ENCODE measurements at regions of chr18 and their contacts with region 1.

Region 1: DNA sequence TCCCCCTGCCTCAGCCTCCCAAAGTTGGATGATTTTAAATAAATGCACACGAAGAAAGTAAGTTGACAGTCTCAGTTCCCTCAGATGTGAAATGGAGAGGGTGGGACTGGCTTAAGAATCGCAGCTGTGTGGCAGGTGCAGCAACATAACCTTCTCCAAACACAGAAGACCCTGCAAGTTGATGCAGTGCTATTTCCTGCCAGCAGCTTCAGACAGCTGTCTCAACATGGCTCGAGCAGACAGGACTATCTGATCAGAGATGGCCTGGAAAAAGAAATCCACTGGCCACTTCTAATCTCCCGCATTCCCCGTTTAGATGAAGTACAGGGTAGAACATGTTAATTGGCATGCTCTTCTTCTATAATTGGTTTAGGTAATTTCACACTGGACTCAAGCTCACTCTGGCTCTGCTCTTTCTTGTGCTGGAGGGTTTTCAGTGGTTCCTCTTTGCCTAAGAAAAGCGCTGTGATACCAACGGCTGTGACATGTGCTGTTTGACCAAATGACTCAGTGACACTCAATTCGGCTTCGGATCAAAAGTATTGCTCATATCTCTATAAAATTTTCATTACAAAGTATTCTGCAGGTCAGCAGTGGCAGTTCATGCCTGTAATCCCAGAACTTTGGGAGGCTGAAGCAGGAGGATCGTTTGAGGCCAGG is 40.2 kb downstream of the MYOM1 start:
- DNase-seq: no peak
- ATAC-seq: peak; percentile 5

Region 2: DNA sequence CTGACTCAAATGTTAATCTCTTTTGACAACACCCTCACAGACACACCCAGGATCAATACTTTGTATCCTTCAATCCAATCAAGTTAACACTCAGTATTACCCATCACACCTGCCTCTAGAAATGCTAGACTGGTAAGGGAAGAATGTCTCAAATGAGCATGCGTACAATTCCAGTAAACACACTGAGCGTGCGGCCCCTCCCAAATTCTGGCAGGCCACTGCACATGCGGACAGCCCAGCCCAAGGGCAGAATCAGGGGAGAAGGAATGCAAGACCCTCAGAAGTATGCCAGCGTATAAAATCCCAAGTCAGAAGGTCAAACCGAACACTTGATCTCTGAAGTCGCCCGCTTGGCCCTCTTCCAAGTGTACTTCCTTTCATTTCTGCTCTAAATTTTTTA is 340.4 kb before region 1 on chr18:
- intact Hi-C with region 1: no loop called
- DNase-seq: no peak
- ATAC-seq: no peak

Region 3: DNA sequence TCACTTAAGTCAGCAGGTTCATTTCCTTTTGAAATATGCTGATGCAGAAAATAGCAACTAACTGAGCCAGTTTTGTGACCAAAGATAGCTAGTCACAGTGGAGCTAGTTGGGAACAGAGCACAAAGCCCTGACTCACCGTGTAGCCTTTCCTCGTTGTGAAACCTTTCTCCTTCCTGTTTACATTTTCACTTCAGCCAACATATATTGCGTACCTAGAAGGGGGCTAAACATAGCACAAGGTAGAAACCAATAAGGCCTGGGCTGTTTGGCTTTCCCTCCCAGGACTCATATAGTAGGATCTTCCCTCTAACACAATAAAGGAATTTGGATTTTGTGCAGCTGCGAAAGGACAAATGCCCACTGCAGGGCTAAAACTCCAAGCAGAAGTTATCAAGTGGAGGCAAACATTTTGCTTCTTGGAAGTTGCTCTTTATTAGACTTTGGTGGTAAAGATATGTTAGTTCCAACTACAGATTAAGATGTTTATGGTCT is 142.1 kb before region 1 on chr18:
- intact Hi-C with region 1: no loop called
- DNase-seq: no peak
- ATAC-seq: peak; percentile 45

Region 4: GRCh38 chr18:3119401-3120335 is 59.9 kb before region 1 on chr18:
- intact Hi-C with region 1: loop called (anchors 10 kb)
- DNase-seq: no peak
- ATAC-seq: no peak

Region 5: DNA sequence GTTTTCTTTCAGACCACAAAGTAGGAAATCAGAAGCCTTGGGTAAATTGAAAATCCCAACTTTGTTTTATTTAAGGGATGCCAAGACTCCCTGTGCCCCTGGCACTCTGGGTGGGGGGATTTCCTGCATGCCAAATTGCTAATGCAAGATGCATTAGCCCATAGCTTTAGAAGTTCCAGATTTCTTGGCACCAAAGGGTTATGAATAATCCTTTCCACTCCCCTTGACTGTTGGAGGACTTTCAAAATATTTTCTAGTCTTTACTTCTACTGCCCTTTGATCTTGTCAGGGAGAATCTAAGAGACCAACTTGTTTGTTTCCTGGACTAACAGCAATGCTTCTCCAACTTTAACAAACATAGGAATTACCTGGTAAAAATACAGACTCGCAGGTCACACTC is 188.6 kb after region 1 on chr18:
- intact Hi-C with region 1: no loop called
- DNase-seq: no peak
- ATAC-seq: no peak